Gastrocnemius medialis (tissue), 4 donors: ENCODE measurements at regions of chr9 and their contacts with region 1.

Region 1: GRCh38 chr9:97529363-97530076 is 28.1 kb downstream of the TMOD1 start:
- DNase-seq: peak; percentile 78 to 85
- ATAC-seq: peak; percentile 60 to 70
- H3K4me3 ChIP-seq: no peak overlapping the region
- H3K27ac ChIP-seq: peak overlapping the region; percentile 95 to 98 (median 98)
- H3K4me1 ChIP-seq: peaks cover 93 to 94% of the 10 kb centered on the region in 2 donors
- H3K27me3 ChIP-seq: no peaks in the 10 kb centered on the region
- CTCF ChIP-seq: no peak
- POLR2A ChIP-seq: peak in 1 of 2 donors; percentile 20

Region 2: GRCh38 chr9:96758845-96759673 is 770.5 kb before region 1 on chr9:
- in situ Hi-C with region 1: no loop called
- intact Hi-C with region 1: no loop called
- DNase-seq: no peak
- ATAC-seq: no peak
- H3K4me3 ChIP-seq: peak overlapping the region in 1 of 4 donors; percentile 24
- H3K27ac ChIP-seq: no peak overlapping the region
- H3K4me1 ChIP-seq: no peaks in the 10 kb centered on the region
- H3K27me3 ChIP-seq: no peaks in the 10 kb centered on the region
- CTCF ChIP-seq: no peak
- POLR2A ChIP-seq: no peak

Region 3: GRCh38 chr9:97220894-97221477 is 308.5 kb before region 1 on chr9:
- in situ Hi-C with region 1: no loop called
- intact Hi-C with region 1: no loop called
- DNase-seq: no peak
- ATAC-seq: no peak
- H3K4me3 ChIP-seq: peak overlapping the region; percentile 27 to 61 (median 36)
- H3K27ac ChIP-seq: no peak overlapping the region
- H3K4me1 ChIP-seq: peaks cover 0 to 18% of the 10 kb centered on the region in 2 donors
- H3K27me3 ChIP-seq: peaks cover 17 to 50% (median 46%) of the 10 kb centered on the region in 3 donors
- CTCF ChIP-seq: no peak
- POLR2A ChIP-seq: no peak

Region 4: DNA sequence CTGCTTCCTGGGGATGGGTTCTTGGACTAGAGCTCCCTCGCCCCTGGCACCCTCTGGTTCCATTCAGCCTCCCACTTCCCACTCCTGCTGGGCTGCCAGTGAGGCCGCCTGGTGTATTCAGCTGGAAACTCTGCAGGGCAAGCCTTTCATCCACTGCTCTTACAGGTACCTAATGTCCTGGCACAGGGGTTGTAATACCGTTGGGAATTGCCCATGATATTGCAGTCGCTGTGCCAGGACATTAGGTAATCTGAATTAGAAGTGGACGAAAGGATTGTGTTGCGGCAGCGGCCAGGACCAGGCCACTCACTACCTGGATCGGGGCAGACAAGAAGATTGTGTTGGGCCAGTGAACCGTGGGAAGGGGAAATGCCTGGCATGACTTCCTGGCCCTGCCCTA is 15.0 kb before region 1 on chr9:
- in situ Hi-C with region 1: no loop called
- intact Hi-C with region 1: loop called (anchors 2 kb)
- DNase-seq: peak; percentile 77 to 89
- ATAC-seq: peak; percentile 85 to 93
- H3K4me3 ChIP-seq: no peak overlapping the region
- H3K27ac ChIP-seq: peak overlapping the region; percentile 89 to 98 (median 96)
- H3K4me1 ChIP-seq: peaks cover 67 to 78% of the 10 kb centered on the region in 2 donors
- H3K27me3 ChIP-seq: no peaks in the 10 kb centered on the region
- CTCF ChIP-seq: peak in 3 of 5 experiments; percentile 12 to 31 (median 29)
- POLR2A ChIP-seq: peak; percentile 31 to 34